GM18951 (cell line): ENCODE measurements at regions of chr5 and their contacts with region 1.

Region 1: GRCh38 chr5:77015938-77016569 is 14.2 kb upstream of the AGGF1 start:
- POLR2A ChIP-seq: no peak

Region 2: DNA sequence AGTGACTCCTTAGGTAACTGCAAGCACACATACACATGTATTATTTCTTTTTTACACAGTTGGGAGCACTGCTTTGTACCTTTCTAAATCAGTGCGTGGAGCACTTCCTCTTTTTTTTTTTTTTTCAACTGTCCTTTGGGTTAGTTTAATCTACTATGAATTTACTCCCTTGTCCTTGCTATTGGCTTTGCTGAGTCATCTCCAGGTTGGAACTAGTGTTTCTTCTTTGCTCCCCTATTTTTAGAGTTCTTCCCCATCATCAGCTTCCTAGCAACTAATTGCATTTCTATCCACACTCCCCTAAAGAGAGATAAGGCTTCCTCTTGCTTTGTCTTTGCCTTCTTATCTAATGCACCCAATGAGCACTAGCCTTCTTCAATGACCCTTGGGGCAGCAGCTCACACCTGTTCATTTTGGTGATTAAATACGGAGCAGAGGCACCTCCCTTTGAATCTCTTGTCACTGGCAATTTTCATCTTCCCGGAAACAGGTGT is 141.9 kb before region 1 on chr5:
- in situ Hi-C with region 1: loop called (anchors 5 kb)
- POLR2A ChIP-seq: no peak